ENCODE measurements at regions of chr17 and their contacts with region 1.

Region 1: GRCh38 chr17:82022981-82023374 is at the start of gene LRRC45:
- DNase-seq: peak; percentile 100
- ATAC-seq: peak; percentile 87
- H3K4me3 ChIP-seq: peak within 1 kb of the TSS; percentile 89 to 100
- H3K27ac ChIP-seq: peak within 1 kb of the TSS; percentile 96
- H3K4me1 ChIP-seq: peaks cover 29 to 47% of the 10 kb centered on the region in 2 experiments
- H3K27me3 ChIP-seq: no peaks in the 10 kb centered on the region
- CTCF ChIP-seq: no peak
- POLR2A ChIP-seq: no peak
- RAD21 ChIP-seq: no peak
- total RNA-seq, gene LRRC45: 40.1 TPM

Region 2: GRCh38 chr17:81890447-81891299 is 132.3 kb before region 1 on chr17:
- CTCF ChIA-PET with region 1: no interaction called
- POLR2A ChIA-PET with region 1: no interaction called
- RAD21 ChIA-PET with region 1: interaction called in 1 of 2 experiments, 10 read pairs
- intact Hi-C with region 1: no loop called
- DNase-seq: no peak
- ATAC-seq: no peak
- H3K4me3 ChIP-seq: peak overlapping the region; percentile 95 to 98
- H3K27ac ChIP-seq: peak overlapping the region; percentile 97
- H3K4me1 ChIP-seq: peaks cover 15 to 34% of the 10 kb centered on the region in 2 experiments
- H3K27me3 ChIP-seq: no peaks in the 10 kb centered on the region
- CTCF ChIP-seq: no peak
- POLR2A ChIP-seq: no peak
- RAD21 ChIP-seq: no peak

Region 3: GRCh38 chr17:81952792-81953228 is 70.2 kb before region 1 on chr17:
- CTCF ChIA-PET with region 1: interaction called, 22 read pairs
- POLR2A ChIA-PET with region 1: interaction called, 6 read pairs
- RAD21 ChIA-PET with region 1: interaction called in 1 of 2 experiments, 3 read pairs
- intact Hi-C with region 1: no loop called
- DNase-seq: no peak
- ATAC-seq: no peak
- H3K4me3 ChIP-seq: no peak overlapping the region
- H3K27ac ChIP-seq: no peak overlapping the region
- H3K4me1 ChIP-seq: peaks cover 0 to 5% of the 10 kb centered on the region in 2 experiments; a peak in 1 of 4 replicates
- H3K27me3 ChIP-seq: no peaks in the 10 kb centered on the region
- CTCF ChIP-seq: no peak
- POLR2A ChIP-seq: no peak
- RAD21 ChIP-seq: no peak

Region 4: DNA sequence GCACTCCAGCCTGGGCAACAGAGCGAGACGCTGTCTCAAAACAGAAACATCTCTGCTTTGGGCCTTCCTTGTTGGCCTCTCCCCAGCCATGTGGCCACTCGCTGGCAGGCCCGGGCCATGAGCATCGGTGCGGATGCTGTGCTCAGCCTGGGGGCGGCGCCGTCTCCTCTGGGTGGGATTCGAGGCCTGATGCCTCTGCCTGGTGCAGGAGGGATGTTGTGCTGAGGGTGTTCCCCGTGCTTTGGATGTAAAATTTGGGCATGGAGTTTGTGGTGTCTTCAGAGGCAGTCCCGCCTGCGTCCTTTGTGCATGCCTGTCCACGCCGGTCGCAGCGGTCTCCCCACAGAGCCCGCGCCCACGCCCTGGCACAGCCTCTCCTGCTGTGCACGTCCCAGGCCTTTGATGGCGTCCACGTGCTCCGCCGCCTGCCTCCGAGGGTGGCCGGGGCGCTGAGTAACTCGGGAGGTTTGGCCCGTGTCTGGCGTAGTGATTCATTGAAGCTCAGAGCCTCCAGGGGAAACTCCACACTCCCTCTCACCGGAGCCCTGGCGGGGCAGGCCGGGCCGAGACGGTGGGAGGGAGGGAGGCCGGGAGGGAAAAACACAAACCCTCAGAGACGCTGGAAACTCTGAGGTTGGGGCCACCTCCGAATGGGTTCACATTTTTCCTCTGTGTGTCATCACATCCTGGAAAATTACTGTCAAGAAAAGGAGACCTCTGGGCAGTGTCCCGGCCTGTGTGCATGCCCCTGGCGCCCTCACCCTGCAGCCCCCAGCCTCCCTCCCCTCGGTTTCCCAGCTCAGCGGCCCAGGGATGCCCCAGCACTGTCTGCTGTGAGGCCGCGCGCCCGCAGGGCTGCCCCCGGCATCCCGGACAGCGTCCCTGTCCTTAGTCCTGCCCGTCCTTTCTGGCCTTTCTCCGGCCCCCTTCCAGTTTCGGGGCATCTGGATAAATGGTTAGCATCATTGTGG is 19.3 kb before region 1 on chr17:
- CTCF ChIA-PET with region 1: interaction called, 23 read pairs
- POLR2A ChIA-PET with region 1: interaction called, 4 read pairs
- RAD21 ChIA-PET with region 1: interaction called, 3 read pairs
- intact Hi-C with region 1: loop called (anchors 2 kb)
- DNase-seq: peak; percentile 84
- ATAC-seq: peak; percentile 86
- H3K4me3 ChIP-seq: peak overlapping the region in 1 of 2 experiments; percentile 27; a peak in 2 of 4 replicates
- H3K27ac ChIP-seq: peak overlapping the region; percentile 86
- H3K4me1 ChIP-seq: peaks cover 44 to 60% of the 10 kb centered on the region in 2 experiments
- H3K27me3 ChIP-seq: no peaks in the 10 kb centered on the region
- CTCF ChIP-seq: peak in 2 of 3 experiments; percentile 18 to 20; a peak in 1 of 6 replicates
- POLR2A ChIP-seq: no peak
- RAD21 ChIP-seq: no peak

Region 5: DNA sequence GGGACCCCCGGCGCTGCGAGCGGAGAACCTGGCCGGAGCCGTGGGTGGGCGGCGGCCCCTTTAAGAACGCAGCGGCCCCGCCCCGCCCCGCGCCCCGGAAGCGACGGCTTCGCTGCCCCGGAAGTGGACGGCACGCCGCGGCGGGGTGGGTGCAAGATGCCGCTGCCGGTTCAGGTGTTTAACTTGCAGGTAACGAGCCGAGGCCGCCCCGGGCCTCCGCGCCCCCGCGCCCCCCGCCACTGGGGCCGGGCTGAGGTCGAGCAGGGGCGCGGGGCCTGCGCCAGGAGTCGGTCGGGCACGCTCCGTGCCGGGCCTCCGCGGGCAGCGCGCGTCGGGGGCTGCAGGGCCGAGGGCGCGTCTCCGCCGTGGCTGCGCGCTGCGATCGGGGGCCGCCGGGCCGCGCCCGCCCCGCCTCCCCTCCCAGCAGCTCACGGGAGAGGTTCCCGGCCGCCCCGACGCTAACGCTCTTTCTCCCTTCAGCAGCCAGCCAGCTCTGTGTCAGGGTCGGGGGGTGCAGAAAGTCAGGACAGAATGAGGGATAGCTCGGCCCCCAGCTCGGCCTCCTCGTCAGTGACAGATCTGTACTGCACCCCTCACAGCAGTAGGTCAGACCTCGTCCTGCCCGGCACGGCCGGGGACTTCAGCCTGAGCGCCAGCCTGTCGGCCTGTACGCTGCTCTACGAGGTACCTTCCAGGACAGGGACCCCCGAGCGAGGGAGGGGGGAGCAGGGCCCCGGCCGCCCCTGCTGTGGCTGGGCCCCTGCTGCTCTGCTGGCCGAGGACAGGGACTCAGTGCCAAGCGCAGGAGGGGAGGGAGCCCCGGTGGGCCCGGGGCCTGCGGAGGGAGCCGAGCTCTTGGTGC is 29.0 kb after region 1 on chr17 and contains the starts of genes GPS1 and RFNG:
- CTCF ChIA-PET with region 1: no interaction called
- POLR2A ChIA-PET with region 1: no interaction called
- RAD21 ChIA-PET with region 1: no interaction called
- intact Hi-C with region 1: no loop called
- DNase-seq: no peak
- ATAC-seq: peak; percentile 83
- H3K4me3 ChIP-seq: peak within 1 kb of the TSS; percentile 94 to 99
- H3K27ac ChIP-seq: peak within 1 kb of the TSS; percentile 81
- H3K4me1 ChIP-seq: peaks cover 13 to 34% of the 10 kb centered on the region in 2 experiments; a peak in 3 of 4 replicates
- H3K27me3 ChIP-seq: no peaks in the 10 kb centered on the region
- CTCF ChIP-seq: no peak
- POLR2A ChIP-seq: no peak
- RAD21 ChIP-seq: no peak
- total RNA-seq, gene GPS1: 205 TPM
- total RNA-seq, gene RFNG: 52.0 TPM

Region 6: DNA sequence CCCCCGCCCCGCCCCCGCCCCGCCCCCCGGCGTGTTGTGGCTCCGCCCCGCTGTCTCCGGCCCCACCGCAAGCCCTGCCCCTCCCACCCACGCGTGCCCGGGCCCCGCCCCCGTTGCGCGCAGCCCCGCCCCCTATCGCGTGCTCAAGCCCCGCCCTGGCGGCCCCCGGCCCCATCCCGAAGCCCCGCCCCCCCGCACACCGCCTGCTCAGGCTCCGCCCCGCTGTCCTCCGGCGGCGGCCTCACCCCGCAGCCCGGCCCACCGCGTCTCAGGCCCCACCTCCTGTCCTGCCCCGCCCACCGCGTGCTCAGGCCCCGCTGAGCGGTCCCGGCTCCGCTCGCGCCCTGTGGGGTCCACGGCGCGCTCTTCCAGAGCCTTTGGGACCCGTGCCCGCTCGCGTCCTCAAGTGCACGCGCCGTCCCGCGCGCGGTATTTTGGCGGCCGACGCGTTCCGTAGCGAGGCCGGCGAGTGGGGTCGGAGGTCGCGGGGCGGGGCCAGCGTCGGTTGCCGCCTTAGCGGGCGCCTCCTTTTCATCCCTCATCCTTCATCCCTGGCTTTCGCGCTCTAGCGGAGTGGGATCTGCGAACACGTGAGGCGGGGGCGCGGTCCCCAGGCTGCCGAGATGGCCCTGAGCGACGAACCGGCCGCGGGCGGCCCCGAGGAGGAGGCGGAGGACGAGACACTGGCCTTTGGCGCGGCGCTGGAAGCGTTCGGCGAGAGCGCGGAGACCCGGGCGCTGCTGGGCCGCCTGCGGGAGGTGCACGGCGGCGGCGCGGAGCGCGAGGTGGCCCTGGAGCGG is 728.8 kb after region 1 on chr17 and contains the start of gene TBCD:
- CTCF ChIA-PET with region 1: no interaction called
- POLR2A ChIA-PET with region 1: no interaction called
- RAD21 ChIA-PET with region 1: no interaction called
- intact Hi-C with region 1: loop called (anchors 5 kb)
- DNase-seq: peak; percentile 82
- ATAC-seq: peak; percentile 82
- H3K4me3 ChIP-seq: peak within 1 kb of the TSS; percentile 96 to 99
- H3K27ac ChIP-seq: peak within 1 kb of the TSS; percentile 94
- H3K4me1 ChIP-seq: peaks cover 18 to 35% of the 10 kb centered on the region in 2 experiments
- H3K27me3 ChIP-seq: no peaks in the 10 kb centered on the region
- CTCF ChIP-seq: no peak
- POLR2A ChIP-seq: peak; percentile 33
- RAD21 ChIP-seq: no peak
- total RNA-seq, gene TBCD: 152 TPM